GM23248 (cell line): ENCODE measurements at regions of chr5 and their contacts with region 1.

Region 1: DNA sequence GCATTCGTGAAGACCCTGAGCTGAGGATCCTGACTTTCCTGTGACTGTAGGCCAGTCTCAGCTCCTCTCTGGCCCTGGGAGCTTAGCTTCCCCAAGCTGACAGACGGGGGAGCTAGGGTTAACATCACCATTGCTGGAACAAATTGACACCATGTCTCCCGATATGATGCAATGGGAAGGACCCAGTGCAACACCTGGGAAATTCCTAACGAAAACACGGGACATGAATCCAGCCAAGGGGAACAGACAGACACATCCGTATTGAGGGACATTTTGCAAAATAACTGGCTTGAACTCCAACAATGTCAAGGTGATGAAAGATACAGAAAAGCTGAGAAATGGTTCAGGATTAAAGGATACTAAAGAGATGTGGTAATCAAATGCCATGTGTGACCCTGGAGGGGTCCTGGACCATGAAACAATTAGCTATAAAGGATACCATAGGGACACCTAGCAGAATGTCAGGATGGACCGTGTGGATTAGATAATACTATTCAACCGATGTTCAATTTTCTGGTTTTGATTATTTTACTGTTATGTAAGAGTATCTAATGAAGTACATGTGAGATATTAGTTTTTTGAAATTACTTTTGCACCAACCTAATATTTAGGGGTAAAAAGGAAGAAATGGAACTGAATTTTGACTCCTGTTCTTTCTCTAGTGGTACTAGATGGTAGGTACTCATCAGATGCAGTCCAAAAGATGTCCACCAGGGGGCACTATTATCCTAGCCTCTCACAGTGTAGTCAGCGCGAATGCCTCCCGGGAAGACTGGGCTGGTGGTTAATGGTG is 52.7 kb downstream of the NDST1 start:
- DNase-seq: peak; percentile 84
- H3K4me3 ChIP-seq: no peak overlapping the region
- H3K27ac ChIP-seq: peak overlapping the region; percentile 44
- H3K4me1 ChIP-seq: peaks cover 19% of the 10 kb centered on the region
- H3K27me3 ChIP-seq: no peaks in the 10 kb centered on the region

Region 2: GRCh38 chr5:150846654-150847333 is 286.2 kb after region 1 on chr5:
- in situ Hi-C with region 1: loop called (anchors 10 kb)
- DNase-seq: peak; percentile 93
- H3K4me3 ChIP-seq: no peak overlapping the region
- H3K27ac ChIP-seq: no peak overlapping the region
- H3K4me1 ChIP-seq: peaks cover 3% of the 10 kb centered on the region
- H3K27me3 ChIP-seq: 0 out of 2 replicates have a peak, but pooled peaks cover 4% of the 10 kb centered on the region

Region 3: DNA sequence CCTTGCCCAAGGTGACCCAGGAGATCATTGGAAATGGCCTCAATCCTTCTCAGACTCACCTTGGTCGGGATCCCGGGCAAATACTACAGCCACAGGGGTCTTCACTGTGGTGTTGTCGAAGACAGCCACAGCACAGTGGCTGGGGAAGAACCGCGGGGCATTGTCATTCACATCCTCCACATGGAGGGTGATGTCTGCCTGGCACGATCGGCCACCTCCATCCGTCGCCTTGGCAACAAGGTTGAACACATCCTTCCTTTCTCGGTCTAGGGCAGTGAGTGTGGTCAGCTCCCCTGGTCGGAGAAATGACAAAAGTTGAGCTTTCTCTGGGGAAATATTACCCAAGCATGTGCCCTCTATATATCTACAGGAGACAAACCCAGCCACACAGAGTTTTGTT is 973.8 kb after region 1 on chr5:
- in situ Hi-C with region 1: no loop called
- DNase-seq: no peak
- H3K4me3 ChIP-seq: no peak overlapping the region
- H3K27ac ChIP-seq: no peak overlapping the region
- H3K4me1 ChIP-seq: peaks cover 8% of the 10 kb centered on the region; the same call in 1 of the 2 replicates
- H3K27me3 ChIP-seq: no peaks in the 10 kb centered on the region